IMR-90 (cell line): ENCODE measurements at regions of chr4 and their contacts with region 1.

Region 1: GRCh38 chr4:114386637-114387233 is 211.9 kb upstream of the UGT8 start:
- DNase-seq: peak; percentile 60
- ATAC-seq: peak; percentile 51; the same call in 1 of the 2 replicates
- H3K4me3 ChIP-seq: no peak overlapping the region
- H3K27ac ChIP-seq: no peak overlapping the region
- H3K4me1 ChIP-seq: peaks cover 4% of the 10 kb centered on the region; the same call in 1 of the 2 replicates
- H3K27me3 ChIP-seq: peaks cover 18% of the 10 kb centered on the region
- CTCF ChIP-seq: peak; percentile 85
- POLR2A ChIP-seq: no peak
- RAD21 ChIP-seq: peak; percentile 85

Region 2: DNA sequence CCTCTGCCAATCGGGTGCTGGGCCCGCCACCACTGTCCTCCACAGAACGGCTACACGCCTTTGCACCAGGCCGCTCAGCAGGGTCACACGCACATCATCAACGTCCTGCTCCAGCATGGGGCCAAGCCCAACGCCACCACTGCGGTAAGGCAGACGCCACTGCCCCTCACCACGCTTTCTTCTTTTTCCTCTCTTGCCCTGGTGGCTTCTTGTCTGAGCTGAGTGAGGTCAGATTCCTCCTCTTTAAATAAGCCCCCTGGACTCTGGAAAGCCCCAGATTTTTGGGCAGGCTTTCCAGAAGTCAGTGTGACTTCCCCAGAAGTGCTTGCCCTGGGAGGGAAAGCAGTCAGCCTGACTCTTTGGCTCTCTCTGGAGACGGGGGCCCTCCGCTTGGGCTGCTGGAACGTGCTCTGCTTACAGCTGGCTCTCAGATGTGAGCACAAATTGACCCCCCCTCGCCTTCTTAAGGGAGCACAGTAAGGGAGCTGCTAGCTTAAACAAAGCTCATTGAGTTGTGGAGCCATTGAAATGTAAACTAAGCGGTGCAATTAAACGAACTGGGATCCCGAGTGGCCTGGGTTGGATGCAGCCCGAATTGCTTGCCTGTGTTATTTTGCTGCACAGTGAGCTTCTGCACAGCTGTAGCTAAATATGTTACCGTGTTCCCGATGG is 1094.2 kb before region 1 on chr4:
- CTCF ChIA-PET with region 1: no interaction called
- POLR2A ChIA-PET with region 1: no interaction called
- dilution Hi-C with region 1: no loop called
- in situ Hi-C with region 1: loop called (anchors 25 kb)
- intact Hi-C with region 1: loop called (anchors 5 kb)
- DNase-seq: peak; percentile 71
- ATAC-seq: peak; percentile 82
- H3K4me3 ChIP-seq: no peak overlapping the region
- H3K27ac ChIP-seq: peak overlapping the region; percentile 66; the same call in 1 of the 2 replicates
- H3K4me1 ChIP-seq: peaks cover 5% of the 10 kb centered on the region
- H3K27me3 ChIP-seq: no peaks in the 10 kb centered on the region
- CTCF ChIP-seq: no peak
- POLR2A ChIP-seq: no peak
- RAD21 ChIP-seq: no peak

Region 3: GRCh38 chr4:113539408-113539807 is 847.3 kb before region 1 on chr4:
- CTCF ChIA-PET with region 1: no interaction called
- POLR2A ChIA-PET with region 1: no interaction called
- dilution Hi-C with region 1: no loop called
- in situ Hi-C with region 1: no loop called
- intact Hi-C with region 1: loop called (anchors 5 kb)
- DNase-seq: peak; percentile 91
- ATAC-seq: peak; percentile 79
- H3K4me3 ChIP-seq: no peak overlapping the region
- H3K27ac ChIP-seq: no peak overlapping the region
- H3K4me1 ChIP-seq: peaks cover 9% of the 10 kb centered on the region
- H3K27me3 ChIP-seq: no peaks in the 10 kb centered on the region
- CTCF ChIP-seq: no peak
- POLR2A ChIP-seq: no peak
- RAD21 ChIP-seq: no peak

Region 4: DNA sequence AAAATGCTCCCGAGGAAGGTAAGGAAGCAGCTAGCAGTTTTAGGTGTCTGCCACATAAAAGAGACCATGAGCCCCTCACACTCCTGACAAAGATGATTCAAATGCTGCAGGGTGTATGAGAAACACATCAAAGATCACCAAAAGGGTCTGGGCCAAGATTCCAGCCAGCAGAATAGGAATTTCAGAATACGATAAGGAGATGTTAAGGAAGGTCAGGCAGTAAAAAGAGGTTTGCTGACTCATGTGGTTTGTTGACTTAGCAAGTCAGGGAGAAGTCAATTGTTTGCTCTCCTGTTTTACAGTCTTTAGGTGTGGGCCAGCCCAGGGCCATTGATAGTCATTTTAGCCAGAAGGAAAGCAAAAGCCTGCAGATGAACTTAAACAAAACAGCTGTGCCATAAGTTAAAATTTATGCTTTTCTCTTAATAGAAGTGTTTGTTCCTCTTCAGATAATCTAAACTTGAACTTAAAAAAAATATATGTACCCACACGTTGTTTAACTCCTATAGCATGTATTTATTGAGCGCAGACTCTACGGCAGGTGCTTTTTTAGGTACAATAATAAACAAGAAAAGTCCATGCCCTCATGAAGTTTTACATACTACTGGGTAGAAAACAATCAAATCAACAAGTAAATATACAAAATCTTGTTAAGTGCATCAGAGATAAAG is 740.8 kb before region 1 on chr4:
- CTCF ChIA-PET with region 1: no interaction called
- POLR2A ChIA-PET with region 1: no interaction called
- dilution Hi-C with region 1: no loop called
- in situ Hi-C with region 1: no loop called
- intact Hi-C with region 1: no loop called
- DNase-seq: peak; percentile 82
- ATAC-seq: peak; percentile 73
- H3K4me3 ChIP-seq: no peak overlapping the region
- H3K27ac ChIP-seq: no peak overlapping the region
- H3K4me1 ChIP-seq: peaks cover 9% of the 10 kb centered on the region
- H3K27me3 ChIP-seq: no peaks in the 10 kb centered on the region
- CTCF ChIP-seq: no peak
- POLR2A ChIP-seq: no peak
- RAD21 ChIP-seq: no peak

Region 5: GRCh38 chr4:113781439-113782040 is 605.2 kb before region 1 on chr4:
- CTCF ChIA-PET with region 1: no interaction called
- POLR2A ChIA-PET with region 1: no interaction called
- dilution Hi-C with region 1: no loop called
- in situ Hi-C with region 1: loop called (anchors 10 kb)
- intact Hi-C with region 1: no loop called
- DNase-seq: peak; percentile 55
- ATAC-seq: no peak
- H3K4me3 ChIP-seq: no peak overlapping the region
- H3K27ac ChIP-seq: no peak overlapping the region
- H3K4me1 ChIP-seq: peaks cover 4% of the 10 kb centered on the region
- H3K27me3 ChIP-seq: no peaks in the 10 kb centered on the region
- CTCF ChIP-seq: peak; percentile 66
- POLR2A ChIP-seq: no peak
- RAD21 ChIP-seq: peak; percentile 59

Region 6: GRCh38 chr4:114659386-114660008 is 272.8 kb after region 1 on chr4:
- CTCF ChIA-PET with region 1: no interaction called
- POLR2A ChIA-PET with region 1: no interaction called
- dilution Hi-C with region 1: no loop called
- in situ Hi-C with region 1: loop called (anchors 10 kb)
- intact Hi-C with region 1: loop called (anchors 1 kb)
- DNase-seq: peak; percentile 64
- ATAC-seq: peak; percentile 92
- H3K4me3 ChIP-seq: no peak overlapping the region
- H3K27ac ChIP-seq: no peak overlapping the region
- H3K4me1 ChIP-seq: no peaks in the 10 kb centered on the region
- H3K27me3 ChIP-seq: no peaks in the 10 kb centered on the region
- CTCF ChIP-seq: peak; percentile 67
- POLR2A ChIP-seq: no peak
- RAD21 ChIP-seq: peak; percentile 56; the same call in 1 of the 2 replicates

Region 7: GRCh38 chr4:114694770-114695169 is 308.0 kb after region 1 on chr4:
- CTCF ChIA-PET with region 1: interaction called, 3 read pairs
- POLR2A ChIA-PET with region 1: no interaction called
- dilution Hi-C with region 1: no loop called
- in situ Hi-C with region 1: loop called (anchors 10 kb)
- intact Hi-C with region 1: loop called (anchors 1 kb)
- DNase-seq: peak; percentile 28
- ATAC-seq: no peak
- H3K4me3 ChIP-seq: no peak overlapping the region
- H3K27ac ChIP-seq: no peak overlapping the region
- H3K4me1 ChIP-seq: no peaks in the 10 kb centered on the region
- H3K27me3 ChIP-seq: no peaks in the 10 kb centered on the region
- CTCF ChIP-seq: peak; percentile 56
- POLR2A ChIP-seq: no peak
- RAD21 ChIP-seq: peak; percentile 53